GM12878 (cell line): ENCODE measurements at regions of chr7 and their contacts with region 1.

Region 1: DNA sequence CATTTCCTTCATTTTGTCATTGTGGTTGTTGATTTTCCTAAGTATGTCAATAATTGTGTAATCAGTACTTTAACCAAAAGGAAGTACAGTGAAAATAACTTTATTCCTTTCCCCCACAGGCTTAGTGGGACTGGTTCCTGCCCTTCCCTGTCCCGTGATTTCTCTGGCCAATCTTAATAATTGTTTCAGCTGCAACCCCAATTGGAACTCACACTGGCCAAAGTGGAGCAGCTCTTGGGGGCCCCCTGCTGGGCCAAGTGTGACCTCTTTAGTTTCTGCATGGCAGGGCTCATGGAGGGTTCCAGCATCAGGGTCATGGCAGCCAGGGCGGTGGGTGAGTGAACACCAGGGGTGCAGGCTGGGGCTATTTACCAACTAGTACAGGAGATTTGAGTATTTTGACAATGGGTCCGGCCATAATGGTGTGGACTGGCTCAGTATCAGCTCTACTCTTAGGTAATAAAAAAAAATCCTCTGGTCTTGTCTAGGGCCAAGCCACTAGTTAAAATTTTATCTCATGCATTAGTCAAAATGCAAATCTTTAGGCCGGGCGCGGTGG is 31.7 kb downstream of the CYCS start:
- DNase-seq: no peak
- ATAC-seq: peak; percentile 96
- H3K4me3 ChIP-seq: no peak overlapping the region
- H3K27ac ChIP-seq: no peak overlapping the region
- H3K4me1 ChIP-seq: peaks cover 4% of the 10 kb centered on the region
- H3K27me3 ChIP-seq: no peaks in the 10 kb centered on the region
- CTCF ChIP-seq: peak; percentile 84 to 90 (median 89)
- EP300 ChIP-seq: no peak
- POLR2A ChIP-seq: no peak
- RAD21 ChIP-seq: peak; percentile 90

Region 2: DNA sequence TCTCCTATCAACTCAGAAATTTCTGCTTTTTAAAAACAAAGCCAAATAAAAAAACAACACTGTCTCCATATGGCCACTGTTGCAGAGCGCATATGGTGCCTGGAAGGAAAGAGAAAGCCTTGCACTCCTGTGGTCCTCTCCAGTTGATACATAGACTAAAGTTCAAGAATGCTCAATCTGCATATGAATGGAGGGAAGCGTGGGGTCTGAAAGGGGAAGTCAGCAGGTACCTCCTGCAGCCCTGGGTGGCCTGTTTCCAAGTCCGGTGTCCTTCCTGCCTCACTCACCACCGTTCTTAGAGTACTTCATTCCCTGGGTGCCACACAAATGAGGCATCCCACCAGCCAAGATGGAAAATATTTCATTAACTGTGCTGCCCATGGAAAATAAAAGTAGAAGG is 658.4 kb before region 1 on chr7:
- CTCF ChIA-PET with region 1: no interaction called
- POLR2A ChIA-PET with region 1: no interaction called
- RAD21 ChIA-PET with region 1: no interaction called
- SMC1A ChIA-PET with region 1: no interaction called
- in situ Hi-C with region 1: no loop called
- intact Hi-C with region 1: no loop called
- DNase-seq: no peak
- ATAC-seq: no peak
- H3K4me3 ChIP-seq: no peak overlapping the region
- H3K27ac ChIP-seq: no peak overlapping the region
- H3K4me1 ChIP-seq: no peaks in the 10 kb centered on the region
- H3K27me3 ChIP-seq: no peaks in the 10 kb centered on the region
- CTCF ChIP-seq: no peak
- EP300 ChIP-seq: no peak
- POLR2A ChIP-seq: no peak
- RAD21 ChIP-seq: no peak

Region 3: DNA sequence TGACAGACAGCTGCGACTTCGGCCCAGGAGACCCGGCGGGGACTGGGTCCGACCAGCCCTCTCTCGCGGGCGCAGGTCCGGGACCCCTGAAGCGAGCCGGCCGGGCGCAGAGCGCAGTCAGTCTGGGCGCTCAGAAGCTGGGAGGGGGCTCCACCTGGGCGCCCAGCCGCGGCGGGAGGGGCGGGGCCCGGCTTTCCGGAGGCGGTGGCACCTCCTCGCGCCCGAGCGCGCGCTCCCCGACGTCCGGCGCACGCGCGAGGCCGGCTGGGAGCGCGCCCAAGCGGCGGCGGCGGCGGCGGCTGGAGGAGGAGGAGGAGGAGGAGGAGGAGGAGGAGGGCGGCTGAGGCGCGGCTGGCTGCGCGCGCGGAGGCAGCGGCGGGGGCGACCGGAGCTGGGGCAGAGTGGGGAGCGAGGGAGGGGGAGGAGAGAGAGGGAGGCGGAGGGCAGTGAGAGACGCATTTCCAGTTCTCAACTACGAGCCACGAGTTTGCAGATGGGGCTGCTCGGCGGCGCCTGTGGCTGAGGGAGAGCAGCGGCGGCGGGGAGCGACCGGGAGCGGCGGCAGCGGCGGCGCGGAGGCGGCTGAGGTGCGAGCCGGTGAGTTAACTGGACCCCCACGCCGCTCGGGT is 520.2 kb before region 1 on chr7 and contains the start of gene PALS2:
- CTCF ChIA-PET with region 1: interaction called, 12 read pairs
- POLR2A ChIA-PET with region 1: no interaction called
- RAD21 ChIA-PET with region 1: interaction called, 5 read pairs
- SMC1A ChIA-PET with region 1: interaction called, 6 read pairs
- in situ Hi-C with region 1: no loop called
- intact Hi-C with region 1: no loop called
- DNase-seq: no peak
- ATAC-seq: peak; percentile 61
- H3K4me3 ChIP-seq: peak within 1 kb of the TSS; percentile 81
- H3K27ac ChIP-seq: peak within 1 kb of the TSS; percentile 60
- H3K4me1 ChIP-seq: peaks cover under 1% of the 10 kb centered on the region; the same call in 1 of the 2 replicates
- H3K27me3 ChIP-seq: peaks cover 0 to 2% of the 10 kb centered on the region in 2 experiments; a peak in 3 of 4 replicates
- CTCF ChIP-seq: no peak
- EP300 ChIP-seq: no peak
- POLR2A ChIP-seq: peak; percentile 66
- RAD21 ChIP-seq: no peak
- polyA plus RNA-seq, gene PALS2: 15.2 to 21.6 TPM

Region 4: DNA sequence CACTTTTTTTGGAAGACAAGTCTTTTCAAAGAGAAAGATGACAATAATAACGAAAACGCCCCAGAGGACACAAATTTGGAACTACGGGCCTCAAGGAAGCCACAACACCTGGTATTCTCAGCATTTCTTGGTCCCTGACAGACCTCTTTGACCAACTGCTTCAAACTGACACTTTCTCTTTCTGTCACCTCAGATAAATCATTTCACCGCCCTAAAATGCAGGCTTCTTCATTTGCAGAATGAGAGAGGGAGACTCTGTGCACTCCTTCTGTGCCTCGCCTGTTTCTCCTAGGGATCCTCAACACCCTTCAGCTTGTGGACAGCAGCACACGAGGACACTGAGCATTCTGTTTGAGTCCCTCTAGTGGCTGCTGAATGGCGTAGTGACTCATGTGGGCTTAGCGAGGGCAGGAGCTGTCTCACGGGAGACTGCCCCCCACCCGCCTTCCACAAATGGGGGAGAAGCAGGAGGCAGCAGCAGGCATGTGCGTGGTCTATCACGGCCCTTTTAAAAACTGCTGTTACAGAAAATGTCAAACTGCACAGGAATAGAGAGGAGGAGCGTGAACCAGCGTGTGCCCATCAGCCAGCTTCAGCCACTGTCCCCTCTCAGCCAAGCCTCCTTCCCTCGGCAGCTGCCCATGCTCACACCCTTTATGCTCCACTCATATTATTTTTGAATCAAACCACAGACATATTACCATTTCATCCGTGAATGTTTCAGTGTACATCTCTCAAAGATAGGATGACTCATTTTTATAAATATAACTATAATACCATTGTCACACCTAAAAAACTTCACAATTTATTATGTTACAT is 377.5 kb before region 1 on chr7:
- CTCF ChIA-PET with region 1: interaction called, 8 read pairs
- POLR2A ChIA-PET with region 1: no interaction called
- RAD21 ChIA-PET with region 1: no interaction called
- SMC1A ChIA-PET with region 1: interaction called, 3 read pairs
- in situ Hi-C with region 1: no loop called
- intact Hi-C with region 1: loop called (anchors 5 kb)
- DNase-seq: peak; percentile 61
- ATAC-seq: peak; percentile 70
- H3K4me3 ChIP-seq: no peak overlapping the region; the same call in 1 of the 2 replicates
- H3K27ac ChIP-seq: peak overlapping the region; percentile 77
- H3K4me1 ChIP-seq: peaks cover 67% of the 10 kb centered on the region
- H3K27me3 ChIP-seq: no peaks in the 10 kb centered on the region
- CTCF ChIP-seq: peak; percentile 50 to 74 (median 55)
- EP300 ChIP-seq: peak; percentile 47 to 74; a peak in 3 of 4 replicates
- POLR2A ChIP-seq: peak; percentile 43; the same call in 1 of the 2 replicates
- RAD21 ChIP-seq: 0 out of 2 replicates have a peak, but pooled peaks have one; percentile 18

Region 5: GRCh38 chr7:24896031-24896501 is 197.3 kb before region 1 on chr7:
- CTCF ChIA-PET with region 1: interaction called, 6 read pairs
- POLR2A ChIA-PET with region 1: no interaction called
- RAD21 ChIA-PET with region 1: interaction called, 3 read pairs
- SMC1A ChIA-PET with region 1: interaction called, 3 read pairs
- in situ Hi-C with region 1: no loop called
- intact Hi-C with region 1: loop called (anchors 5 kb)
- DNase-seq: peak; percentile 52
- ATAC-seq: peak; percentile 70
- H3K4me3 ChIP-seq: no peak overlapping the region
- H3K27ac ChIP-seq: peak overlapping the region; percentile 75
- H3K4me1 ChIP-seq: peaks cover 57% of the 10 kb centered on the region
- H3K27me3 ChIP-seq: no peaks in the 10 kb centered on the region
- CTCF ChIP-seq: peak in 1 of 3 experiments; percentile 45; a peak in 2 of 6 replicates
- EP300 ChIP-seq: peak; percentile 55 to 79; a peak in 3 of 4 replicates
- POLR2A ChIP-seq: no peak
- RAD21 ChIP-seq: peak; percentile 40; the same call in 1 of the 2 replicates

Region 6: DNA sequence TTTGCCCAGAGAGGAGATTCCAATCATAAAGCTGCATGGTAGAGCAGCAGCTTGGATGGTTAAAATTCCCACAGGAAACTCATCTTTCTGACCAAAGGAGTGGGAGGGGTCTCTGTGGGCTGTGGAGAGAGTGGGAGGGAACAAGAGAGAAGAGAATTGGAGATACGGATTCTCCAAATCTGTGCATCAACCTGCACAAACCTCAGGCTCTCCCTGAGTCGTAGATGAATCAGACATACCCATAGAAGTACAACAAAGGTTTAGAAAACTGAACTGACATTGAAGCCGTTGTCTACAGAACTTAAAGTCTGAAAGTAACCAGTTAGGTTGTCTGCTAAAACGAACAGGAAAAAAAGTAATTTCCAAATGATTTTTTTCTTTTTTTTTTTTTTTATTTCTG is 10.1 kb before region 1 on chr7:
- CTCF ChIA-PET with region 1: interaction called, 55 read pairs
- POLR2A ChIA-PET with region 1: no interaction called
- RAD21 ChIA-PET with region 1: no interaction called
- SMC1A ChIA-PET with region 1: interaction called, 3 read pairs
- in situ Hi-C with region 1: no loop called
- intact Hi-C with region 1: no loop called
- DNase-seq: no peak
- ATAC-seq: no peak
- H3K4me3 ChIP-seq: no peak overlapping the region
- H3K27ac ChIP-seq: no peak overlapping the region
- H3K4me1 ChIP-seq: peaks cover 10% of the 10 kb centered on the region; the same call in 1 of the 2 replicates
- H3K27me3 ChIP-seq: no peaks in the 10 kb centered on the region
- CTCF ChIP-seq: no peak
- EP300 ChIP-seq: no peak
- POLR2A ChIP-seq: no peak
- RAD21 ChIP-seq: no peak

Region 7: GRCh38 chr7:25158966-25159365 is 65.6 kb after region 1 on chr7:
- CTCF ChIA-PET with region 1: interaction called, 24 read pairs
- POLR2A ChIA-PET with region 1: no interaction called
- RAD21 ChIA-PET with region 1: interaction called, 5 read pairs
- SMC1A ChIA-PET with region 1: interaction called, 7 read pairs
- in situ Hi-C with region 1: no loop called
- intact Hi-C with region 1: loop called (anchors 1 kb)
- DNase-seq: no peak
- ATAC-seq: no peak
- H3K4me3 ChIP-seq: no peak overlapping the region
- H3K27ac ChIP-seq: no peak overlapping the region
- H3K4me1 ChIP-seq: no peaks in the 10 kb centered on the region
- H3K27me3 ChIP-seq: no peaks in the 10 kb centered on the region
- CTCF ChIP-seq: no peak
- EP300 ChIP-seq: no peak
- POLR2A ChIP-seq: no peak
- RAD21 ChIP-seq: no peak

Region 8: GRCh38 chr7:25731068-25731845 is 637.9 kb after region 1 on chr7:
- CTCF ChIA-PET with region 1: no interaction called
- POLR2A ChIA-PET with region 1: no interaction called
- RAD21 ChIA-PET with region 1: no interaction called
- SMC1A ChIA-PET with region 1: no interaction called
- in situ Hi-C with region 1: no loop called
- intact Hi-C with region 1: no loop called
- DNase-seq: no peak
- ATAC-seq: no peak
- H3K4me3 ChIP-seq: no peak overlapping the region
- H3K27ac ChIP-seq: no peak overlapping the region
- H3K4me1 ChIP-seq: no peaks in the 10 kb centered on the region
- H3K27me3 ChIP-seq: peaks cover 0 to 2% of the 10 kb centered on the region in 2 experiments; a peak in 2 of 4 replicates
- CTCF ChIP-seq: no peak
- EP300 ChIP-seq: no peak
- POLR2A ChIP-seq: no peak
- RAD21 ChIP-seq: no peak